ENCODE measurements at regions of chr2 and their contacts with region 1.

Region 1: GRCh38 chr2:17557596-17557995 is 17.1 kb downstream of the VSNL1 start:
- DNase-seq: no peak
- H3K4me3 ChIP-seq: no peak overlapping the region
- H3K27ac ChIP-seq: no peak overlapping the region
- H3K4me1 ChIP-seq: no peaks in the 10 kb centered on the region
- H3K27me3 ChIP-seq: no peaks in the 10 kb centered on the region
- CTCF ChIP-seq: no peak
- EP300 ChIP-seq: no peak
- RAD21 ChIP-seq: no peak

Region 2: DNA sequence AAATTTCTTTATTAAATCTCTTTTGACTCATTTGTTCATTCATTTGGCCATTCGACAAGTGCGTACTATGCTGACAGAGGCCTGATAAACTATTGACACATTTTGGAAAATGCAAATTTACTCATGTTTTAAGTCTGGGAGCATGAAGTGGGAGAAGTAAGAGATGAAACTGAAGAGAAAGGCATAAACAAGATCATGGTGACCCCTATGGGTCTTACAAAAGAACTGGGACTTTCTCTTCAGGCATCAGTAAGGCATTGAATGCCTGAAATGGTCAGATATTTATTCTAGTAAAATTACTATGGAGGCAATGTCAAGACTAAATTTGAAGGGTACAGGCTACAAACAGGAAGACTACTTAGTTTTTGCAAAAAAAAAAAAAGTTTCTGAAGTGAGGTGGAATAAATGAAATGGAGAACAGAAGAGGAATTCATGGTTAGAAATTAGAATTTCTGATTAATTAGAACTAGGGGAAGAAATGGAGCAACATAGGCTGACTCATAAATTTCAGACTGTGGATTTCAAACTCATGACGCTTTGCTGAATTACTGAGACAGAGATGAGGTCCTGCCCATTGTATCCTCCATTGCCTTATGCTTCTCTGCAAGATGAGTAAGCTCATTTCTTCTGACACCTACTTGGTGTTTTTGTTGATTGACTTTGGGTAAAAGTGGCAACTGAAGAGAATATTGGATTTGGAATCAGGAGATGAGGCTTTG is 15.6 kb after region 1 on chr2:
- CTCF ChIA-PET with region 1: interaction called, 10 read pairs
- POLR2A ChIA-PET with region 1: no interaction called
- DNase-seq: peak; percentile 36
- H3K4me3 ChIP-seq: no peak overlapping the region
- H3K27ac ChIP-seq: no peak overlapping the region
- H3K4me1 ChIP-seq: no peaks in the 10 kb centered on the region
- H3K27me3 ChIP-seq: no peaks in the 10 kb centered on the region; the same call in 1 of the 2 replicates
- CTCF ChIP-seq: peak; percentile 33
- EP300 ChIP-seq: no peak
- RAD21 ChIP-seq: peak; percentile 70